ENCODE measurements at regions of chr3 and their contacts with region 1.

Region 1: GRCh38 chr3:108552267-108553159 is 36.7 kb downstream of the CIP2A start:
- DNase-seq: no peak
- H3K4me3 ChIP-seq: no peak overlapping the region
- CTCF ChIP-seq: no peak

Region 2: DNA sequence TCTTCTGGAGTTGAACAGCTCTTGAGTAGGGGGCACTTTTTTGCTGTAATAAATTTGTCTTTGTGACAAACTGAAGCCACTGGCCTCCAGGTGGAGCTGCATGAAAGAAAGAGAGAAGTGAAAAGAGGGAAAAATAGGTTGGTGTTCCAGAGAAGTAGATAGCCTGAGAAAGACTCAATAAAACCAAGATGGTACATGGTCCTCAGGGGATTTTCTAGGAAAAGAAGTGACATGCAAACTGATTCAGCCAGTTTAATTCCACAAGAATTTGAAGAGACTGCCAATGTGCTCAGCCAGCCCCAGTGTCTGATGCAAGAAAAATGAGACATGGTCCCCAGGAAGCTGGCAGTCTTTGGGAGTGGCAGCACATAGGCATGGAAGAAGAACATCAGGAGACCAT is 614.4 kb before region 1 on chr3:
- CTCF ChIA-PET with region 1: interaction called, 19 read pairs
- POLR2A ChIA-PET with region 1: no interaction called
- DNase-seq: no peak
- H3K4me3 ChIP-seq: no peak overlapping the region
- CTCF ChIP-seq: no peak

Region 3: DNA sequence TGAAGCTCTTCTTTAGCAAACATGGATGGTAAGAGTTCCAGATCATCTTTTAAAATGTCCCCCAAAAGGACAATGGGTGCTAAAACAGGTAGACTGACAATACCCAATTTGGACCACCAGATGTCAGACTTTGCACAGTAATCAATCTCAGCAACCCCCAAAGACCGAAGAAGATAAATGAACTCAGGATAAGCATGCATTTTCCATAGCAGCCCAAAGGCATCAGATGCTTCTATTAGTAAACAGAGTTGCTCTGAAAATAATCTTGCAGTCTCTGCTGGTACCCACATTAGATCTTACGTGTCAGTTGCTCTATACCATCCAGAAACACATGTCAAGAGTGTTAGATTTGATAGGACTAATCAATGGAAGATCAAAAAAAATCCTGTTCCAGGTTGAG is 62.7 kb before region 1 on chr3:
- CTCF ChIA-PET with region 1: interaction called, 239 read pairs
- POLR2A ChIA-PET with region 1: no interaction called
- DNase-seq: no peak
- H3K4me3 ChIP-seq: no peak overlapping the region
- CTCF ChIP-seq: peak; percentile 50

Region 4: DNA sequence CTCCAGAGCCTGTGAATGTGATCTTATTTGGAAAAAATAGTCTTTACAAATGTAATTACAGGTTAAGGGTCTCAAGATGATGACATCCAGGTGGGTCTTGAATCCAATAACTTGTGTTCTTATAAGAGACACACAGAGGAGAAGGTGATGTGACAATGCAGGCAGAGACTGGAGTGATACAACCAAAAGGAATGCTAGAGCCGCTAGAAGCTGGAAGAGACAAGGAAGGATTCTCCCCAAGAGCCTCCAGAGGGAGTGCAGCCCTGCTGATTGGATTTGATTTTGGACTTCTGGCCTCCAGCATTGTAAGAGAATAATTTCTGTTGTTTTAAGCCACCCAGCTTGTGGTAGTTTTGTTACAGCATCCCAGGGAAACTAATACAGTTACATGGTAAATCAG is 51.8 kb before region 1 on chr3:
- CTCF ChIA-PET with region 1: interaction called, 239 read pairs
- POLR2A ChIA-PET with region 1: no interaction called
- DNase-seq: no peak
- H3K4me3 ChIP-seq: no peak overlapping the region
- CTCF ChIP-seq: no peak

Region 5: DNA sequence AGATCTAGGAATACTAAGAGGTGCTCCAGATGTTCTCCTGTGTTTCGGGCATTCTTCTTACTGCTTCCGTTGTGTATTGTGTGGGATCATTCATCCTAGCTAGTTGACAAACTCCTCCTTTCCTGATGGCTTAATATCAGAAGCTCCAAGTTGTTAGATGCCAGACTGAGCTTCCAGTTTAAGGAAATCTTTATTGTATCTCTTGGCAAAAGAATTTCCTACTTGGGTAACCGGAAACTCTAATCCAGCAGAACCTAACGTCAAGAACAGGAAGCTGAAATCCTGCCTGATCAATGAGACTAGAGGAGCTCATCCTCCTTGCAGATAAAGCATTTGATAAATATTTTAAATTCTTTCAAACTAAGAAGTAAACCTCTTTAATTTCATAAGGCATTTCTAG is 14.4 kb before region 1 on chr3:
- CTCF ChIA-PET with region 1: interaction called, 26 read pairs
- POLR2A ChIA-PET with region 1: no interaction called
- DNase-seq: no peak
- H3K4me3 ChIP-seq: no peak overlapping the region
- CTCF ChIP-seq: no peak

Region 6: DNA sequence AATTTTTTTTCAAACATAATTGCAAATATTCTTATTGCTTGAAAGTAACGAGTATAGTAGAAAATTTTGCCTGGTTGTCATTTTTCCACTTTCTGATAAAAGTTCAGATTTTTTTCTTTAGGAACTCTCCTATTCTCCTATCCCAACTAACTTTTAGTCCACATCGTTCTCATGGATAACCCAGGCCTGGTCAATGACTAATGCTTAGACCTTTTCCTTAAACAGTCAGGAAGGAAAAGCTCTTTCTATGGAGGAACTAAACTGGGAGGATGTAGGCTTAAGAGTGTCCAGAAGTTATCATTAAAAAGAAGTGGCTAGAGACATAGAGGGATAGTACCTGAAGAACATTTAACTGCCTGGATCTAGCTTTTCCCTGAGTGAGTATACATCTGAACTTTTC is 10.1 kb after region 1 on chr3:
- CTCF ChIA-PET with region 1: interaction called, 17 read pairs
- POLR2A ChIA-PET with region 1: no interaction called
- DNase-seq: no peak
- H3K4me3 ChIP-seq: no peak overlapping the region
- CTCF ChIP-seq: no peak

Region 7: GRCh38 chr3:108578064-108578463 is 25.6 kb after region 1 on chr3:
- CTCF ChIA-PET with region 1: no interaction called
- POLR2A ChIA-PET with region 1: no interaction called
- DNase-seq: no peak
- H3K4me3 ChIP-seq: no peak overlapping the region
- CTCF ChIP-seq: no peak

Region 8: DNA sequence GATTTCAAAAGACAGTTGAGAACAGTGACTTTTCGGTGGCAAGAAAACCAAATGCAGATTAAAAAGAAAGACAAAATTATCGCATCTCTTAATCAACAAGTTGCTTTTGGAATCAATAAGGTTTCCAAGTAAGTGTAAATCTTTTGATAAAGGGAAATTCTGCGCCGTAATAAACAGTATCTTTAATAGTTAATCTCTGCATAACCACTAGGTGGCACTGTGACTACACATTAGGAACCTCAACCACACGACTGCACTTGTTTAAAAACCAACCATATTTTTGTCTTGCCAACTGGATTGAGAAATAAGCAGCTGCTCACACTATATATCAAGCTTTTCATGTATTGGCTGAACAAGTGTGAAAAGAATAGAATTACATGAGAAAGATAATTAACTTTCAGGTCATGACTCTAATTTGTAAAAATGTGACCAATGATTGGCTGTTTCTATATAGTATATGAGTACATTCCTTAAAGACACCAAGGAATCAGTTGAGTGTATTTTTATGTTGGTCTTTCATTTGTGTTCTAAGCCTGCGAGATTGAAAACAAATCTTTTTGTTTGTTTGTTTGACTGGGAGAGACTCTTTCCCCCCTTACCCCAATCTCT is 109.7 kb after region 1 on chr3:
- CTCF ChIA-PET with region 1: no interaction called
- POLR2A ChIA-PET with region 1: no interaction called
- DNase-seq: peak; percentile 38
- H3K4me3 ChIP-seq: no peak overlapping the region
- CTCF ChIP-seq: peak; percentile 44

Region 9: DNA sequence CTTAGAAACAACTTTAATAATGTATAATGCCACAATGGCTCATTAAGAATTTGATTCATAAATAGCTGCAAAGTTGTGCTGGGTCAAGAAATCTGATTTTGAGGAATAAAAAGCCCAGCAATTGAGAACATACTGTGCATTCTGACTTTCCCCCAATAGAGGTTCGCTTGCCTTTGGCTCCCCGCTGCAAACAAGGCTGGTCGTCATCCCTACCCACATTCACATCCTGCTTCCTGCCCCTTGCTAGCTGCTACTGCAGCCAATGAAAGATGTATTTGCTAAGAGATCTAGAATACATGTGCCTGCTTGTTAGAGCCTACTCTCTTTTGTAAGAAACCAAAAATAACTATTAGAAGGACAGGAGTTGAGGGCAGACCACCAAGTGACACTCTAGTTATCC is 452.9 kb after region 1 on chr3:
- CTCF ChIA-PET with region 1: no interaction called
- POLR2A ChIA-PET with region 1: no interaction called
- DNase-seq: no peak
- H3K4me3 ChIP-seq: no peak overlapping the region
- CTCF ChIP-seq: no peak